Left cardiac atrium (tissue), 4 donors: ENCODE measurements at regions of chr12 and their contacts with region 1.

Region 1: DNA sequence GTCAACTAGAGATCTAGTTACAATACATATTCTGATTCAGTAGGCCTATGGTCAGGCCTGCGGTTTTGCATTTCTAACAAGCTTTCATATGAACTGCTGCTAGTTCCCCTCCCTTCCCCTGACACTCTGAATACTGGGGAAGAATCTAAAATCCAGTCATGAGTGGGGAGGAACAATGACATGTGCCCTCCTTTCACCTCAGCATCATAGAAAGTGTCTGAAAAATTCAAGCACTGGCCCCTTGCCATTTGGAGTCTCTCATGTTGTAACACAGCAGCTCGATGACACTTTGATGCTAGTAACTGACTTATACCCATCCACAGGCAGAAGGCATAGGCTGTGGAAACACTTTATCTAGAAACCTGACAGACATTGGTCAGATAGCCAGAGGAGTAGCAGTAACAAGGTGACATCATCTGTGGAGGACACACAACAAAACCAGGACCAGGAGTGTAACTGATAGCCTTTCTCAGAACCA is 161.9 kb upstream of the RASSF8 start:
- DNase-seq: peak; percentile 28
- ATAC-seq: peak; percentile 86 to 90

Region 2: DNA sequence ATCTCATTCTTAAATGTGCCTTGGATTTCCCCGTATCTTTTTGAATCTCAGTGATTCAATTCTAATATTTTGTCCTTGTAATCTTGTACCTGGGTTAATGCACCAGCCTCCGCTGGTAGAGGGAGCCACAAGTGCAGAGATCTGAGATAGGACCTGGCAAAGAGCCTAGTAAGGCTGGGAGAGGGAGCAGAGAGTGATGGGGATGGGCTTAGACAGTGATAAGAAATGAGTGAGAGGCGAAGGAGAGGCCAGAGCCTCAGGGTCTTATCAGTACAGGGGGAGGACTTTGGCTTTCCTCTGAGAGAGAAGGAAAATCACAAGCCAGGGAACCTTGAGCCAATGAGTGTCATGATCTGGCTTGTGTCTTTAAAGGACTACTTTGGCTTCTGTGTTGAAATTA is 213.0 kb before region 1 on chr12:
- intact Hi-C with region 1: no loop called
- DNase-seq: peak; percentile 41
- ATAC-seq: peak; percentile 92 to 96

Region 3: DNA sequence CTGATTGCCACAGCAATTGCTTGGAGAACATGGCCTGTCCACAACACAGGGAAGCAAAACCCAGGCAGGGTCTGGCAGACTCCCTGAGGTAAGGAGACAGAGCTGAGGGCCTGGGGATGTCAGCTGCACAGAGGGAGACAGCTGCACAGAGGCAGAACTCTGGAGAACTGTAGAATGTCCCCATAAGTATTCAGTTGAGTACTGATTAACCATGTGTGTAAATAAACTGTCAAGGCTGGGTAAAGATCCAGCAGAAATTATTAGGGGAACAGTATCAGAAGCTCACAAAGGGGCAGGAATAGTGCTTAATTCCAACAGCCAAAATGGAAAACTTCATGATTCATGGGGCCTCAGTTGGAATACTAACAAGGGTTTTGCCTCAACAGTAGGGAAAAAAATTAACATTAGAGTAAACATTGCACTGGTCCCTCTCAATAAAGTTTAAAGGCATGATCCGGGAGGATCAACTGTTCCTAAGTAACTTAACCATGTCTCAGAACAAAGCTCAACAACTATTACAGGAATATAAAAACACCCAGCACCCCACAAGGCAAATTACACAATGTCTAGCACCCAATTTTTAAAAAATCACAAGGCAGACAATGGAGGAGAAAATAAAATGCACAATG is 39.4 kb before region 1 on chr12:
- intact Hi-C with region 1: no loop called
- DNase-seq: no peak
- ATAC-seq: no peak

Region 4: DNA sequence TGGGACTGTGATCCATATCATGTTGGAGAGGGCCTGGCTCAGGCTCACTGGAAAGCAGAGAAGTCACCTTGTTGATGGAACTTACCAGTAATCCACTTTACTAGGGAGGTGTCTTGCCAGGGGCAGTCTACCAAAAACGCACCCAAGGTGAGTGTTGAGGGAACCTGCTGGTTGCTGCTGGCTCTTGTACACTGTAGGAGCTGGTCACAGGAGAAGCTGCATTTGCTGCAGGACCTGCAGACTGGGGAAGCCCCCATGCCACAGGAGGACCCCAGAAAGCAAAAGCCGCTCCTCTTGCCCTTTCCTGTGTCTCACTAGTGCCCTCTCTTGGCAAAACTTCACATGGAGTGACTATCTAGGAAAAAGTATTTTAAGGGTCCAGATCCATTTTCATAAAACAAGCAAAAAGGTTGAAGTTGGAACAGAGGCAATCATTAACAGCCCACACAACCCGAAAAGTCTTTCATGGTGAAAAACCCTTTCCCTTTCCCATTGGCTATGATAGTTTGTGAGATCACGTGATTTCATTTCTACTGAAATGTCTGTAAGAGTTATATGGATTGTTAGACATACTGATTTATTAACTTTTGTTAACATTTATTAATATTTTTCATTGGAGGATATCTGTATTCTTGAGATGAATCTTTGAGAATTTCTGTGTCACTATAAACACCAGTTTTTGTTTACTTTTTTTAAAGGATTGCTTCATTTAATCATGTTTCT is 221.1 kb after region 1 on chr12:
- intact Hi-C with region 1: loop called in 1 of 2 experiments (anchors 10 kb)
- DNase-seq: no peak
- ATAC-seq: no peak